HepG2 (cell line): ENCODE measurements at regions of chr1 and their contacts with region 1.

Region 1: DNA sequence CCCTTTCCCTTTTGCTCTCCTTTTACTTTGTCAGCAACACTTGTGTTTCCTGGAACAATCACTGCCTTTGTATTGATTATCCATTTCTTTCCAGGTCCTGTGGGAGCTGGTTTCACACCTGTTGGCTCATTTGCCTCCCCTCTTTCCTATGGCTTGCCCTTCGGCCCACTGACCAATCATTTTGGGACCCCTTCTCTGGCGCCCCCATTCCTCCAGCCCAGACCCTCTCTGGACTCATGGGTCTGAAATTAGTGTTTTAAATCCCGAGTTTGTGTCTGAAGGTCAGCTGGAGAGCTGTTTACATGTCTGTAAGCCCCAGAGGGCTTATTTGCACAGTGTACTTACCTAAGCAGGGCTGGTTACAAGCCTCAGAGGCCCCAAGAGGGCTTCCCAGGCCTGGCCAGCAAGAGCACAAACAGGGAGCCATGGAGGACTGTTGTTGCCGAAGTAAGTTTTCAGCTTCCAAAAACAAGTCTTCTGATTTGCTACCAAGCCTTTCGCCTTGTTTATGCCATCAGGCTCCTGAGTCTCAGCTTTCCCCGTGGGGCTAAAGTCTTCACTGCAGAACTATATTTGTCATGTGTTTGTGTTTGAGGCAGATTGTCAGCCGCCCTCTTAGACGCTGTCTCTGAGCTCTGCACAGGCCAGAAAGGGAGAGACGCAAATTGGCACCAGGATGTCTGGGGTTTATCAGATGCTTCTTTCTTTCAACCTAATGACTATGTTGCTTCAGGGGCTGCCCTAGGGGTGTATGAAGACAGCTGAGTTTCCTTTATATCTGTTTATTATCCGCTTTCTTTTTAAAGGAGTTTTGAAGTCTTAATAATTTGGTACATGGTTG is 93.0 kb downstream of the ATP1A1 start:
- DNase-seq: peak; percentile 93
- ATAC-seq: peak; percentile 100
- H3K4me3 ChIP-seq: peak overlapping the region; percentile 69 to 79 (median 71)
- H3K27ac ChIP-seq: peak overlapping the region; percentile 99
- H3K4me1 ChIP-seq: peaks cover 70% of the 10 kb centered on the region
- H3K27me3 ChIP-seq: no peaks in the 10 kb centered on the region; a peak in 1 of 5 replicates
- CTCF ChIP-seq: peak; percentile 47
- EP300 ChIP-seq: peak; percentile 71 to 85; a peak in 3 of 4 replicates
- POLR2A ChIP-seq: peak; percentile 74 to 86
- RAD21 ChIP-seq: peak; percentile 35; the same call in 1 of the 2 replicates

Region 2: GRCh38 chr1:114490274-114490693 is 1975.8 kb before region 1 on chr1:
- CTCF ChIA-PET with region 1: no interaction called
- POLR2A ChIA-PET with region 1: no interaction called
- in situ Hi-C with region 1: no loop called
- intact Hi-C with region 1: no loop called
- DNase-seq: no peak
- ATAC-seq: no peak
- H3K4me3 ChIP-seq: no peak overlapping the region
- H3K27ac ChIP-seq: no peak overlapping the region
- H3K4me1 ChIP-seq: peaks cover 34% of the 10 kb centered on the region
- H3K27me3 ChIP-seq: no peaks in the 10 kb centered on the region
- CTCF ChIP-seq: no peak
- EP300 ChIP-seq: no peak
- POLR2A ChIP-seq: no peak
- RAD21 ChIP-seq: no peak

Region 3: DNA sequence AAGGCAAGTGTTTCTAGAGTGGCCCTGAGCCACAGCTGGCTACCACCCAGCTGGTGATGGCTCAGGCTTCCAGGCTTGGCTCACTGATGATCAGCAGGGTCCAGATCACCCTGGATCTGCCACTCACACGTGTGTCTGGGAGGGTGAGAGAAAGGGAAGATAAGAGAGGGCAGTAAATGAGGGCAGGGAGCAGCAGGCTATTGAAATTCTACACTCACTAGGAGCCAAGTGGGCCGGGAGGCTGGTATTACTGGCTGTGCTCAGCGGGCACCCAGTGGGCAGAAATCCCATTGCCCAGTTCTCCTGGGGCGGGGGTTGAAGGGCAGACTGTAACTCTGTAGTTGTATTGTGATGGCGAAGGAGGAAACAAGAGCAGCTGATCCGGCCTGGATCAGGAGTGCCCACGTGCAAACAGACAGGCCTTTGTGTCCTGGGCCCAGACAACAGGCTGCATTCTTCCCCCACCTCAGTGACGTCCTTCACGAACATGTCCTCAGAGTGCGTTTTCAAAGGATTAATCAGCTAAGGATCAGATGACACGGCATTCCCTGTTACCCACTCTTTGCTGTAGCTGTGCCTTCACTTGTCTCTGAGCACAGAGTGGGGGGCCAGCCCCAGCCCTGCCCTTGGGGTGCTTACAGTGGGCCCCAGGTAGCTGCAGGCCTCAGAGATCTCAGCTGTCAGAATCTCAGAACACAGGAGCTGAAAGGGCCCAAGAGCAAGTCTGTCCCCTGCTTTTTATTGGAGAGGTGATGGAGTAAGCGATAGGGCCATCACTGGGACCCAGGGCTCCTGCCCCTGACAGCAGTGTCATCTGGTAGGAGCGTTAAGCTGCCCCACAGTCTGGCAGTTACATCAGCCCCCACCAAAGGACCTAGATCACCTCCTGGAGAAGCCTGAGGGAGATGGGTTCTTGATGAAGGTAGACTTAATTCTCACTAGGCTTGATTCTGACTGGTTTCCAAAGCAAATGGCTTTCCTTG is 32.5 kb before region 1 on chr1:
- CTCF ChIA-PET with region 1: no interaction called
- POLR2A ChIA-PET with region 1: interaction called, 15 read pairs
- in situ Hi-C with region 1: no loop called
- intact Hi-C with region 1: no loop called
- DNase-seq: peak; percentile 93
- ATAC-seq: peak; percentile 94
- H3K4me3 ChIP-seq: peak overlapping the region in 1 of 3 experiments; percentile 54; a peak in 2 of 6 replicates
- H3K27ac ChIP-seq: peak overlapping the region; percentile 53
- H3K4me1 ChIP-seq: peaks cover 52% of the 10 kb centered on the region
- H3K27me3 ChIP-seq: no peaks in the 10 kb centered on the region
- CTCF ChIP-seq: no peak
- EP300 ChIP-seq: peak in 1 of 2 experiments; percentile 50; a peak in 1 of 4 replicates
- POLR2A ChIP-seq: no peak
- RAD21 ChIP-seq: no peak

Region 4: DNA sequence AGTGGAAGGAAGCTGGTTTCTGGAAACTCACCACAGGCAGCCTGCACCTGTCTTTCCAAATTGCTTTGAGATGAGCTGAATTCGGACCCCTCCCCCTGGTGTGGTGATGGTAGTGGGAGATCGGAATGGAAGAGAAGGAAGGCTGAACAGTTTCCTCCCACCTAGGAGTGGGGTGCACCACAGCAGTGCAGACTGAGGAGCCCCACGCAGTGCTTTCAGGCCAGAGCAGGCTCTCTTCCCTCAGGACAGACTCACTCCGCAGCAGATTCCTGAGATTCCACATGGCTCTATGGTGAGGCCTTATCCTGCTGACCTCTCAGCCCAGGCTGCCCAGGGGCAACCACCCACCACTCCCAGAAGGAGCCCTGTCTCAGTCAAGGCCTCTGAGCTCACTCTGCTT is 12.2 kb before region 1 on chr1:
- CTCF ChIA-PET with region 1: no interaction called
- POLR2A ChIA-PET with region 1: interaction called, 32 read pairs
- in situ Hi-C with region 1: no loop called
- intact Hi-C with region 1: loop called (anchors 2 kb)
- DNase-seq: no peak
- ATAC-seq: peak; percentile 91
- H3K4me3 ChIP-seq: no peak overlapping the region
- H3K27ac ChIP-seq: no peak overlapping the region
- H3K4me1 ChIP-seq: peaks cover 52% of the 10 kb centered on the region
- H3K27me3 ChIP-seq: no peaks in the 10 kb centered on the region
- CTCF ChIP-seq: no peak
- EP300 ChIP-seq: no peak
- POLR2A ChIP-seq: no peak
- RAD21 ChIP-seq: no peak

Region 5: DNA sequence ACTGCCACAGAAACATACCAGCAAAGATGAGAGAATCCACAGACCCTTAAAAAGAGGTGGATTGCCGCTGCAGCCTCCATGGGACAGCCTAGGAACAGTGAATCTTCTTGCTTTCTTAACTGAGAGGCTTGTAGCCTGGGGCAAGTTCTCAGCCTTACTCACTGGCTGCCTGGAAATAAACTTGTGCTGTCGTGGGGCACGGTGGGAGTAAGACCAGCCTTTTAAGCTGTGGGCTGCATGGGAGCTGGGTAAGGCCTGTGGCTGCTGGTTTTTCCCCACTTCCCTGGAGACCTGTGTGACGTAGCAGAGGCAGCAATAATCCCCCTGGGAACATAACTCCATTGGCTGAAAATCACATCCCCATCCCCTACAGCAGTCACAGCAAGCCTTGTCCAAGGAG is 318.9 kb after region 1 on chr1:
- CTCF ChIA-PET with region 1: no interaction called
- POLR2A ChIA-PET with region 1: no interaction called
- in situ Hi-C with region 1: no loop called
- intact Hi-C with region 1: no loop called
- DNase-seq: no peak
- ATAC-seq: no peak
- H3K4me3 ChIP-seq: no peak overlapping the region
- H3K27ac ChIP-seq: no peak overlapping the region
- H3K4me1 ChIP-seq: no peaks in the 10 kb centered on the region
- H3K27me3 ChIP-seq: no peaks in the 10 kb centered on the region
- CTCF ChIP-seq: no peak
- EP300 ChIP-seq: no peak
- POLR2A ChIP-seq: no peak
- RAD21 ChIP-seq: no peak